ENCODE measurements at regions of chr17 and their contacts with region 1.

Region 1: GRCh38 chr17:64262417-64263260 is at the start of gene TEX2:
- DNase-seq: peak; percentile 27 to 63 (median 44)
- H3K4me3 ChIP-seq: peak within 1 kb of the TSS; percentile 68 to 99 (median 92)
- H3K27ac ChIP-seq: peak within 1 kb of the TSS in 57 of 59 donors; percentile 18 to 95 (median 85)
- H3K27me3 ChIP-seq: no peaks in the 10 kb centered on the region
- CTCF ChIP-seq: no peak
- total RNA-seq, gene TEX2: 59.9 to 107 (median 79.7) TPM

Region 2: DNA sequence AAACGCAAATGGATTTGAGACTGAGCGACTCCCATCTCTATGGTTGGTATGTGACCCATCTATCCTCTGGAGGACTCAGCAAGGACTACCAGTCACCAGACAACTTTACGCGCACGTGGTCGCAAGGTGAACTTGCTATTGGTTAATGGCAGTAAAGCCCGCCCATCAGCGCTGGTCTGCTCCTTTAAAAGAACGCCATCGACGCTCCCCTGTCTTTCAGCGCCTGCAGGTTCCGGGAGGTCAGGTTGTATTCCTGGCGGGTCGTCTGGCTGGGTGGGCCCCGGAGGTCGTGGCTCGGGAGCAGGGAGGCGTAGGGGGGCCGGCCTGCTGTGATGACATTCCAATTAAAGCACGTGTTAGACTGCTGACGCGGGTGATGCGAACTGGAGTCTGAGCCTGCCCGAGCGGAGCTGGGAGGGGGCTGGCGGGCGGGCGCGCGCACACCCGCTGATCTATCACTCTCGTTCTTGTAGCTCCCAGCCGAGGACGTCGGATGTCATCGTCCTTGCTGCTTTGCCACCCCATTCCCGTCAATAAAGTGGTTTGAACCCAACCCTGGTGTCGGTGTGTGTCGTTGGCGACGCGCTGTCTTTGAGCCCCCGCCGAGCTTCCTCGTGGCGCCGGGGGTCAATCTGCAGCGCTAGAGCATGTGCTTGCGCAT is 116.8 kb before region 1 on chr17:
- intact Hi-C with region 1: loop called (anchors 2 to 5 kb)
- DNase-seq: peak; percentile 97 to 100 (median 99)
- H3K4me3 ChIP-seq: peak overlapping the region; percentile 52 to 98 (median 91)
- H3K27ac ChIP-seq: peak overlapping the region; percentile 86 to 99 (median 96)
- H3K27me3 ChIP-seq: no peaks in the 10 kb centered on the region
- CTCF ChIP-seq: peak in 42 of 56 donors; percentile 0 to 64 (median 34)

Region 3: DNA sequence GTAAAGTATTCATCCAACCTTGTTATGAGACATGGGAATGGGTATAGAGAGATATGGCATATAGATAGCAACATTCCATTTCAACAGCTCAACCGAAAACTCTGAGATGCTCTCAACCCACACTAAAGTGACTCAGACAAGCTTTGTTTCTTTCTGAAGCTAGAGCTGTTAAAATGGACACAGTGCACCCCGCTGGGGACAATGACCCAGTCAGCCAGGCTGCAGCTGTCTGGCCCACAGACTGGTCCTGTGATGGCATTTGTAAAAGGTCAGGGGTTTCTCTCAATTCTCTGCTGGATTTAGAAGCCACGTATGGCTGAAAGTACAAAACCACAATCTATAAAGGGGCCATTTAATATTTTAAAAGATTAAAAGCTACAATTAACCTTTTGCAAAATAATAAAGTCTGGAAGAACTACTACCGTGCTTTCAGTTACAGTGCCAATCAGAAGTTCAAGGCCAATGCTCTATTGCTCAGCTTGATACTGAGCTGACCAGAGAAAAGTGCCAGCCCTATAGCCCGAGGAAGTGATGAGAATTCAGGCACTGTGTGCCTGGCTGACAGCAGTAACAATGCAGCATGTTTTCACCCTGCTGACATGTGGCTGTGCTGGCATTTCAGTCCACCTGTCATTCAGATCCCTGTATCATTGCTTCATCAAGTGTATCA is 59.8 kb before region 1 on chr17:
- intact Hi-C with region 1: loop called (anchors 5 kb)
- DNase-seq: peak; percentile 44 to 84 (median 78)
- H3K4me3 ChIP-seq: peak overlapping the region in 18 of 59 donors; percentile 1 to 35 (median 12)
- H3K27ac ChIP-seq: peak overlapping the region; percentile 77 to 98 (median 93)
- H3K27me3 ChIP-seq: no peaks in the 10 kb centered on the region
- CTCF ChIP-seq: peak in 25 of 56 donors; percentile 6 to 48 (median 17)

Region 4: GRCh38 chr17:64216338-64217248 is 46.0 kb before region 1 on chr17:
- intact Hi-C with region 1: no loop called
- DNase-seq: peak in 1 of 10 donors; percentile 23
- H3K4me3 ChIP-seq: no peak overlapping the region
- H3K27ac ChIP-seq: peak overlapping the region in 56 of 59 donors; percentile 3 to 86 (median 70)
- H3K27me3 ChIP-seq: no peaks in the 10 kb centered on the region
- CTCF ChIP-seq: peak in 5 of 56 donors; percentile 3 to 27 (median 6)

Region 5: GRCh38 chr17:65074778-65075250 is 812.2 kb after region 1 on chr17:
- intact Hi-C with region 1: no loop called
- DNase-seq: peak in 3 of 10 donors; percentile 39 to 81 (median 40)
- H3K4me3 ChIP-seq: peak overlapping the region in 2 of 59 donors; percentile 2 to 21
- H3K27ac ChIP-seq: peak overlapping the region in 11 of 59 donors; percentile 4 to 77 (median 23)
- H3K27me3 ChIP-seq: no peaks in the 10 kb centered on the region
- CTCF ChIP-seq: peak in 1 of 56 donors; percentile 6